Posterior vena cava (tissue), 2 donors: ENCODE measurements at regions of chr15 and their contacts with region 1.

Region 1: GRCh38 chr15:46552316-46552715 is 917.5 kb downstream of the SQOR start:
- DNase-seq: no peak

Region 2: GRCh38 chr15:48010316-48010715 is 1458.0 kb after region 1 on chr15:
- intact Hi-C with region 1: loop called in 1 of 2 experiments (anchors 5 kb)
- DNase-seq: no peak